ENCODE measurements at regions of chr19 and their contacts with region 1.

Region 1: GRCh38 chr19:52139252-52140031 is at the start of gene ZNF616:
- DNase-seq: peak; percentile 99
- ATAC-seq: peak; percentile 97
- H3K4me3 ChIP-seq: peak within 1 kb of the TSS; percentile 74 to 78
- H3K27ac ChIP-seq: peak within 1 kb of the TSS; percentile 78 to 85
- H3K4me1 ChIP-seq: peaks cover 0 to 3% of the 10 kb centered on the region in 2 donors
- H3K27me3 ChIP-seq: no peaks in the 10 kb centered on the region
- total RNA-seq, gene ZNF616: 8.1 to 11.0 TPM

Region 2: GRCh38 chr19:51933116-51933515 is 206.3 kb before region 1 on chr19:
- intact Hi-C with region 1: no loop called
- DNase-seq: no peak
- ATAC-seq: no peak
- H3K4me3 ChIP-seq: no peak overlapping the region
- H3K27ac ChIP-seq: no peak overlapping the region
- H3K4me1 ChIP-seq: no peaks in the 10 kb centered on the region
- H3K27me3 ChIP-seq: no peaks in the 10 kb centered on the region

Region 3: DNA sequence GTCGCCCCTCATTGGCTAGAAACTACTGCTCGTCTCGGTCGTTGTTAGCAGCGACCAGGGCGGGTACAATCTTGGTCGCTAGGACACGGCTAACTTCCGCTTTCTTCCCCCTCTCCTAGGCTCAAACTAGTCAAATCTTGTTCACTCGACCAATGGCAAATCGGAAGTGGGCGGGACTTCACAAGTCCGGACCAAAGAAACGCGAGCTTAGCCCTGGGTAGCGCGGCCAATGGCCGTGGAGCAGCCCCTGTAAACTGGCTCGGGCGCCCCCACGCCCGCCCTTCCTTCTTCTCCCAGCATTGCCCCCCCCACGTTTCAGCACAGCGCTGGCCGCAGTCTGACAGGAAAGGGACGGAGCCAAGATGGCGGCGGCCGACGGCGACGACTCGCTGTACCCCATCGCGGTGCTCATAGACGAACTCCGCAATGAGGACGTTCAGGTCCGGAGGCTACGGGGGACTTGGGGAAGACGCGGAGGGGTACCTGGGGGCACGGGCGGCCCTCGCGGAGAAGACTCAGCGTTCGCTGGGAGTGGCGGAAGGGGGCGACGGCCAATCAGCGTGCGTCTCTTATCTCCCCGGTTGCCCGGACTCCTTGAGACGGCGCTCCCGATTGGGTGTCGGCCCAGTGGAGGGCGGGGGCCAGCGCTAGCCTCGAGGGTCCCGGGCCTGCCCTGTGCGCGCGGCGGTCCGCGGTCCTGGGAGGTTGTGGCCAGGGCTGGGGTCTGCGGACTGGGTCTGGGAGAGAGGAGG is 50.5 kb after region 1 on chr19 and contains the start of gene PPP2R1A:
- intact Hi-C with region 1: loop called (anchors 1 to 5 kb)
- DNase-seq: peak; percentile 99 to 100
- ATAC-seq: peak; percentile 98
- H3K4me3 ChIP-seq: peak within 1 kb of the TSS; percentile 70 to 73
- H3K27ac ChIP-seq: peak within 1 kb of the TSS; percentile 90 to 93
- H3K4me1 ChIP-seq: peaks cover 2 to 12% of the 10 kb centered on the region in 2 donors
- H3K27me3 ChIP-seq: no peaks in the 10 kb centered on the region
- total RNA-seq, gene PPP2R1A: 174 to 178 TPM

Region 4: GRCh38 chr19:52237771-52238400 is 98.4 kb after region 1 on chr19:
- intact Hi-C with region 1: loop called (anchors 1 to 2 kb)
- DNase-seq: peak in 1 of 2 donors; percentile 63
- ATAC-seq: peak; percentile 78
- H3K4me3 ChIP-seq: no peak overlapping the region
- H3K27ac ChIP-seq: no peak overlapping the region
- H3K4me1 ChIP-seq: no peaks in the 10 kb centered on the region
- H3K27me3 ChIP-seq: no peaks in the 10 kb centered on the region

Measured in aorta (tissue), 5 donors.